Naive thymus-derived CD4-positive, alpha-beta T cell (primary cell): ENCODE measurements at regions of chr10 and their contacts with region 1.

Region 1: GRCh38 chr10:110871298-110872084 is at the start of gene PDCD4:
- DNase-seq: peak; percentile 83 to 98 (median 90)
- ATAC-seq: peak; percentile 78
- H3K4me3 ChIP-seq: peak within 1 kb of the TSS; percentile 78
- H3K4me3 Mint-ChIP-seq: peak within 1 kb of the TSS; percentile 79 to 99 (median 96)
- H3K27ac ChIP-seq: peak within 1 kb of the TSS; percentile 100
- H3K27ac Mint-ChIP-seq: peak within 1 kb of the TSS; percentile 95 to 100 (median 99)
- H3K4me1 ChIP-seq: peaks cover 53 to 71% of the 10 kb centered on the region in 2 donors
- H3K4me1 Mint-ChIP-seq: peaks cover 43 to 77% (median 68%) of the 10 kb centered on the region in 7 donors
- H3K27me3 ChIP-seq: no peaks in the 10 kb centered on the region
- H3K27me3 Mint-ChIP-seq: peaks cover 0 to 2% (median 0%) of the 10 kb centered on the region in 5 donors
- total RNA-seq, gene PDCD4: 93.7 to 283 (median 223) TPM

Region 2: DNA sequence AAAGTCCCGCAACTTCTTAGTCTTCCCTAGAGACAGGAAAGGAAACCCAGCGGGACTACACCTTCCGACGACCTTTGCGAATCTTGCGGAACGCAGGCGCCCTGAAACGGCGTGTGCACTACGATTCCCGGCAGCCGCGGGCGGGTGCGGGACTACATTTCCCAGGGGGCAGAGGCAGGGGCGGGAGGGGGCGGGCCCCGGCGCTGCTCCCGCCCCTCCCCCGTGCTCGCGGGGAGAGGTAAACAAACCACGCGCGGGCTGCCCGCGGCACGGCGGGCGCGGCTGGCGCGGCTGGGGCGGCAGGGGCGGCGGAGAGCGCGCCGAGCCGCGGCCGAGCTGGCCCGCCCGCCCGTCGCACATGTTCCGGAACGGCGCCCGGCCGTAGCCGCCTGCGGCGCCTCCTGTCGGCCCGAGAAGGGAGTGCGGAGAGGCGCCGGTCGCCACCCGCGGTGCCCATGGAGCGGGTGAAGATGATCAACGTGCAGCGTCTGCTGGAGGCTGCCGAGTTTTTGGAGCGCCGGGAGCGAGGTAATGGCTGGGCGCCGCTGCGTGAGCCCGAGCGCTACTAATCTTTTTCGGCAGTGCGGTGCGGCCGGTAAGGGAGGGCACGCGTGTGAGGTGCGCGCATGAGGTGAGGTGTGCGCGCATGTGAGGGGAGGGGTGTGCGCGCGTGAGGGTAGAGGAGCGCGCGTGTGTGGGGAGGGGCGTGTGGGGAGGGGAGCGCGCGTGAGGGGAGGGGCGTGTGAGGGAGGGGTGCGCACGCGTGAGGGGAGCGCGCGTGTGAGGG is 645.5 kb before region 1 on chr10:
- CTCF ChIA-PET with region 1: no interaction called
- POLR2A ChIA-PET with region 1: no interaction called
- intact Hi-C with region 1: loop called in 1 of 2 experiments (anchors 5 kb)
- DNase-seq: peak; percentile 83 to 91 (median 88)
- ATAC-seq: peak; percentile 73
- H3K4me3 ChIP-seq: peak overlapping the region; percentile 75
- H3K4me3 Mint-ChIP-seq: peak overlapping the region; percentile 87 to 99 (median 94)
- H3K27ac ChIP-seq: peak overlapping the region; percentile 92
- H3K27ac Mint-ChIP-seq: peak overlapping the region; percentile 78 to 97 (median 96)
- H3K4me1 ChIP-seq: peaks cover 16 to 27% of the 10 kb centered on the region in 2 donors
- H3K4me1 Mint-ChIP-seq: peaks cover 27 to 68% (median 49%) of the 10 kb centered on the region in 7 donors
- H3K27me3 ChIP-seq: no peaks in the 10 kb centered on the region
- H3K27me3 Mint-ChIP-seq: no peaks in the 10 kb centered on the region

Region 3: DNA sequence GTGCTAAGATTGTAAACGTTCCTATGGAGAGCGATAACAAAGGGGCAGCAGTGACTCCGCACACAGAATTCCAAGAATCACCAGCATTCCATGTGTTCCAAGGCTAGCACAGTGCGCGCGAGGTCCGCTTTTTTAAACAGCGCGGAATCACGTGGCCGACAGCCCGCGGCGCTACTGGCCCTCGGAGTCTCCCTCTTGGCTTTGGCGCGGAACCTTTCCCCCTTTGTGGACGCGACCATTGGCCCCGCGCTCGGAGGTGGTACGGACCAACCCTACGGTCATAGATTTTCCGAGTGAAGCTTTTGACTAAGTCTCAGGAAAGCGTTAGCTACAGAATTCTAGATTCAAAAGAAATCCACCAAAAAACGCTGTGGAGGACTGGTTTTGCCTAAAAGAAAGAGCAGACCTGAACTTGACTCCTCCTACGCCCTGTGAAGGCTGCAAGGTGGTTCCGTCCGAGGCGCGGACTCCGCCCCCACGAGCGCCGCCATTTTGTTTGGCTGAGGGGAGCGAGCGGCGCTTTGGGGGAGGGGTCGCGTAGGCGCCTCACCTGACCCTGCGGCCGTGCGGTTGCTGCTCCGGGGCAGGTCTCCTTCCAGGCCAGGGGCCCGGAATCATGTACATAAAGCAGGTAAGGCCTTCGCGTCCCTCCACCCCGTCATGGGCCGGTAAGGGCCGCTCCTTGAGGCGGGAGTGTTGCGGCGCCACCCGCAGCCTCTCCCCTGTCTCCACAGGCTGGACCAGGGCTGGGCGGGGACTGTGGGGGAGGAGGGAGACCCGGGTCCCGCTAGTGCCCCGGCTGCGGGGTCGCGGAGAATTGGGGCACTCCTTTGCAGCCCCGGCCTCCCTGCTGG is 304.1 kb before region 1 on chr10 and contains the start of gene SMC3:
- CTCF ChIA-PET with region 1: no interaction called
- POLR2A ChIA-PET with region 1: no interaction called
- intact Hi-C with region 1: loop called (anchors 5 kb)
- DNase-seq: peak; percentile 82 to 96 (median 94)
- ATAC-seq: peak; percentile 94
- H3K4me3 ChIP-seq: peak within 1 kb of the TSS; percentile 88
- H3K4me3 Mint-ChIP-seq: peak within 1 kb of the TSS; percentile 91 to 99 (median 96)
- H3K27ac ChIP-seq: peak within 1 kb of the TSS; percentile 88
- H3K27ac Mint-ChIP-seq: peak within 1 kb of the TSS; percentile 96 to 99 (median 97)
- H3K4me1 ChIP-seq: peaks cover 20 to 21% of the 10 kb centered on the region in 2 donors
- H3K4me1 Mint-ChIP-seq: peaks cover 21 to 45% (median 38%) of the 10 kb centered on the region in 7 donors
- H3K27me3 ChIP-seq: no peaks in the 10 kb centered on the region
- H3K27me3 Mint-ChIP-seq: peaks cover 6 to 26% (median 14%) of the 10 kb centered on the region in 5 donors
- total RNA-seq, gene SMC3: 29.8 to 69.8 (median 48.5) TPM

Region 4: GRCh38 chr10:110783509-110784107 is 87.9 kb before region 1 on chr10:
- CTCF ChIA-PET with region 1: no interaction called
- POLR2A ChIA-PET with region 1: interaction called, 4 read pairs
- intact Hi-C with region 1: loop called in 1 of 2 experiments (anchors 1 kb)
- DNase-seq: peak; percentile 36 to 92 (median 88)
- ATAC-seq: peak; percentile 94
- H3K4me3 ChIP-seq: no peak overlapping the region
- H3K4me3 Mint-ChIP-seq: peak overlapping the region; percentile 5 to 69 (median 50)
- H3K27ac ChIP-seq: peak overlapping the region; percentile 70
- H3K27ac Mint-ChIP-seq: peak overlapping the region; percentile 68 to 97 (median 93)
- H3K4me1 ChIP-seq: peaks cover 4 to 21% of the 10 kb centered on the region in 2 donors
- H3K4me1 Mint-ChIP-seq: peaks cover 1 to 72% (median 44%) of the 10 kb centered on the region in 7 donors
- H3K27me3 ChIP-seq: no peaks in the 10 kb centered on the region
- H3K27me3 Mint-ChIP-seq: no peaks in the 10 kb centered on the region

Region 5: DNA sequence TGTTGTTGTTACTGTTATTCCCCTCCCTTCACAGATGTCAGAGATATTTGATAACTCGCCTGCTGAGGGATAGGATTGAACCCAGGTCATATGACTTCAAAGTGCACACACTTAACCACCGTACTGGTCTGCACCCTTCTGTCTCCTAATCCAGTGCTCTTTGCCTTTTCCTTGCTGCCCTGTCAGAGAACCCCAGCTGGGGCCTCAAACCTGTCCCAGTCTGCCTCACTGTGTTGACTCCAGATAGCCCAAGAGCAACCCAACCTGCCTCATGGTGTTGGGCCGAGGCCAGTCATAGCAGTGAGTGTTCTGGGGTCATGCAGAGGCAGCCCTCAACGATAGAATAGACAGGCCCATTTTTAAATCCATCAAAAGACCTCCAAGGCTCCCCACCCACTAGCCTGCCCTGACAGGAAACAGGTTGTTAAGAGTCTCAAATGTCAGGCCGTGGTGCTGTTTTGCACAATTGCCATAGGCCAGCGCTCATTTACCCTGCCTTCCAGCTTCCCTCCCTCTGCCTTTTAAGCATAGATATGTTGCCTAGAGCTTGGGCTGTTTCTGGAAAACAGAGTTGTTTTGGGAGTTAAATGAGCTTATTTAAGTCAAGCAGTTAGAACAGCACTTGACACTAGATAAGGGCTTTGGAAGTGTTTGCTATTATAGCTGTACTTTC is 36.7 kb before region 1 on chr10:
- CTCF ChIA-PET with region 1: interaction called, 7 read pairs
- POLR2A ChIA-PET with region 1: interaction called, 19 read pairs
- intact Hi-C with region 1: loop called in 1 of 2 experiments (anchors 1 kb)
- DNase-seq: peak in 7 of 9 donors; percentile 51 to 77 (median 69)
- ATAC-seq: peak; percentile 81
- H3K4me3 ChIP-seq: no peak overlapping the region
- H3K4me3 Mint-ChIP-seq: peak overlapping the region in 9 of 10 donors; percentile 13 to 84 (median 63)
- H3K27ac ChIP-seq: peak overlapping the region; percentile 66
- H3K27ac Mint-ChIP-seq: peak overlapping the region; percentile 82 to 98 (median 97)
- H3K4me1 ChIP-seq: peaks cover 0 to 39% of the 10 kb centered on the region in 2 donors
- H3K4me1 Mint-ChIP-seq: peaks cover 18 to 67% (median 45%) of the 10 kb centered on the region in 7 donors
- H3K27me3 ChIP-seq: no peaks in the 10 kb centered on the region
- H3K27me3 Mint-ChIP-seq: no peaks in the 10 kb centered on the region

Region 6: GRCh38 chr10:110852255-110852896 is 19.1 kb before region 1 on chr10:
- CTCF ChIA-PET with region 1: interaction called, 7 read pairs
- POLR2A ChIA-PET with region 1: interaction called, 76 read pairs
- intact Hi-C with region 1: no loop called
- DNase-seq: peak in 1 of 9 donors; percentile 47
- ATAC-seq: no peak
- H3K4me3 ChIP-seq: no peak overlapping the region
- H3K4me3 Mint-ChIP-seq: peak overlapping the region; percentile 52 to 73 (median 62)
- H3K27ac ChIP-seq: peak overlapping the region; percentile 33
- H3K27ac Mint-ChIP-seq: peak overlapping the region; percentile 43 to 88 (median 78)
- H3K4me1 ChIP-seq: peaks cover 63 to 79% of the 10 kb centered on the region in 2 donors
- H3K4me1 Mint-ChIP-seq: peaks cover 46 to 81% (median 79%) of the 10 kb centered on the region in 7 donors
- H3K27me3 ChIP-seq: no peaks in the 10 kb centered on the region
- H3K27me3 Mint-ChIP-seq: no peaks in the 10 kb centered on the region

Region 7: GRCh38 chr10:110883924-110884323 is 12.4 kb after region 1 on chr10:
- CTCF ChIA-PET with region 1: interaction called, 4 read pairs
- POLR2A ChIA-PET with region 1: interaction called, 9 read pairs
- intact Hi-C with region 1: loop called in 1 of 2 experiments (anchors 1 kb)
- DNase-seq: no peak
- ATAC-seq: no peak
- H3K4me3 ChIP-seq: peak overlapping the region; percentile 42
- H3K4me3 Mint-ChIP-seq: peak overlapping the region; percentile 69 to 85 (median 74)
- H3K27ac ChIP-seq: peak overlapping the region; percentile 62
- H3K27ac Mint-ChIP-seq: peak overlapping the region in 8 of 9 donors; percentile 24 to 85 (median 76)
- H3K4me1 ChIP-seq: peaks cover 40 to 60% of the 10 kb centered on the region in 2 donors
- H3K4me1 Mint-ChIP-seq: peaks cover 37 to 81% (median 74%) of the 10 kb centered on the region in 7 donors
- H3K27me3 ChIP-seq: no peaks in the 10 kb centered on the region
- H3K27me3 Mint-ChIP-seq: no peaks in the 10 kb centered on the region

Region 8: GRCh38 chr10:112446855-112447711 is 1575.6 kb after region 1 on chr10 and contains the starts of genes VTI1A and ZDHHC6:
- CTCF ChIA-PET with region 1: no interaction called
- POLR2A ChIA-PET with region 1: no interaction called
- intact Hi-C with region 1: no loop called
- DNase-seq: peak; percentile 70 to 89 (median 84)
- ATAC-seq: peak; percentile 95
- H3K4me3 ChIP-seq: peak within 1 kb of the TSS; percentile 85
- H3K4me3 Mint-ChIP-seq: peak within 1 kb of the TSS; percentile 92 to 100 (median 96)
- H3K27ac ChIP-seq: peak within 1 kb of the TSS; percentile 90
- H3K27ac Mint-ChIP-seq: peak within 1 kb of the TSS; percentile 95 to 100 (median 99)
- H3K4me1 ChIP-seq: peaks cover 23 to 25% of the 10 kb centered on the region in 2 donors
- H3K4me1 Mint-ChIP-seq: peaks cover 31 to 81% (median 65%) of the 10 kb centered on the region in 7 donors
- H3K27me3 ChIP-seq: no peaks in the 10 kb centered on the region
- H3K27me3 Mint-ChIP-seq: no peaks in the 10 kb centered on the region
- total RNA-seq, gene VTI1A: 40.2 to 56.8 (median 51.4) TPM
- total RNA-seq, gene ZDHHC6: 34.3 to 66.3 (median 50.9) TPM